ENCODE measurements at regions of chr20 and their contacts with region 1.

Region 1: GRCh38 chr20:10419550-10420133 is 14.4 kb downstream of the MKKS start:
- DNase-seq: peak; percentile 9 to 40
- H3K4me3 ChIP-seq: no peak overlapping the region
- H3K27ac ChIP-seq: peak overlapping the region; percentile 77
- H3K4me1 ChIP-seq: peaks cover 36% of the 10 kb centered on the region
- H3K27me3 ChIP-seq: no peaks in the 10 kb centered on the region
- CTCF ChIP-seq: no peak

Region 2: GRCh38 chr20:10306440-10307358 is 112.9 kb before region 1 on chr20:
- CTCF ChIA-PET with region 1: no interaction called
- POLR2A ChIA-PET with region 1: no interaction called
- intact Hi-C with region 1: loop called (anchors 5 kb)
- DNase-seq: peak in 1 of 2 experiments; percentile 78
- H3K4me3 ChIP-seq: no peak overlapping the region
- H3K27ac ChIP-seq: peak overlapping the region; percentile 43
- H3K4me1 ChIP-seq: peaks cover 59% of the 10 kb centered on the region
- H3K27me3 ChIP-seq: no peaks in the 10 kb centered on the region
- CTCF ChIP-seq: no peak

Region 3: DNA sequence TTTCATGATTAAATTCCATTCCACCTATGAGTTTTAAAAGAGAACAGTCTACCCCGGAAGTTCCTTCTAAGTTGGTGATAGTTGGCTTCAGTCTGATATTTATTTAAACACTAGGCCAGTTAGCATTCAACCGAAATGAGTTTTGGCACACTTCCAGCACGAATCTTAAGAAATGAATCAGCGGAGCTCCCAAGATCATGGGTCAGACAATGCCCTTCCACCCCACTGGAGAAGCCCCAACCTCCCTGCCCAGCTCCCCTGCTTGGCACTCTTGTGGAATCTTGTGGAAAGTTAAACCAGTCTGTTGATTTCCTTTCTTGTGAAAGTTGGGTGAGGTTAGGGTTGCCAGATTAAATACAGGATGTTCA is 49.9 kb before region 1 on chr20:
- CTCF ChIA-PET with region 1: no interaction called
- POLR2A ChIA-PET with region 1: no interaction called
- intact Hi-C with region 1: loop called (anchors 1 kb)
- DNase-seq: peak; percentile 41 to 59
- H3K4me3 ChIP-seq: no peak overlapping the region
- H3K27ac ChIP-seq: no peak overlapping the region
- H3K4me1 ChIP-seq: peaks cover 17% of the 10 kb centered on the region
- H3K27me3 ChIP-seq: no peaks in the 10 kb centered on the region
- CTCF ChIP-seq: no peak

Region 4: DNA sequence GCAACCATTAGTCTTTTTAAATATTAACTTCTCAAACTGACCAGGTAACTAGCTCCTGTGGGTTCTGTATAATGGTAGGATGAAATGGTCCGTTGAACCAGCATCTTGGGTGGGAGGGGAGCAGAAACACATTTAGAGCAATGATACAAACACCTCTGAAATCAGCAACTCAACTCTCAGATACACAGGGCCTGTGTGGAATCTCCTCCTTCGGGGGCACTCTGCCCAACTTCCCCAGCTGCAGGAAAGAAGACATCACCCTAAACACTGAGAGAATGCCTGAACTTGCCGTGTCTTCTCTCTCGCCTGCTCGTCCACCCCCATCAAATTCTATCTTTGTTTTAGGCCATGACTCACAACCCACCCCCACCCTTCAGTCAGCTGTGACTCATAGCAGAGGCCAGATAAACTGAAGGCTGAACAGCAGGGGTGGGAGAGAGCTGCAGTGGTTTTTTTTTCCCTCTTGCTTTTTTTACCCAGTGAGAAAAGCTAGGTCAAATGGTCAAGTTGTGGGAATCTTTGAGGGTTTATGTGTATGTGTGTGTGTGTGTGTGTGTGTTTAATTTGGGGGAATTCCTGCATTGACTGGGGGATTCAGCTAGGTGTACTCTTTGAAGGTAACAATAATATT is 847.6 kb after region 1 on chr20:
- CTCF ChIA-PET with region 1: no interaction called
- POLR2A ChIA-PET with region 1: interaction called, 10 read pairs
- intact Hi-C with region 1: no loop called
- DNase-seq: peak; percentile 62 to 84
- H3K4me3 ChIP-seq: peak overlapping the region; percentile 19; the same call in 1 of the 2 replicates
- H3K27ac ChIP-seq: peak overlapping the region; percentile 61
- H3K4me1 ChIP-seq: peaks cover 21% of the 10 kb centered on the region
- H3K27me3 ChIP-seq: no peaks in the 10 kb centered on the region
- CTCF ChIP-seq: no peak

Region 5: GRCh38 chr20:11454966-11455799 is 1035.5 kb after region 1 on chr20:
- CTCF ChIA-PET with region 1: no interaction called
- POLR2A ChIA-PET with region 1: no interaction called
- intact Hi-C with region 1: loop called (anchors 5 kb)
- DNase-seq: peak; percentile 49 to 90
- H3K4me3 ChIP-seq: peak overlapping the region; percentile 13; the same call in 1 of the 2 replicates
- H3K27ac ChIP-seq: peak overlapping the region; percentile 89
- H3K4me1 ChIP-seq: peaks cover 42% of the 10 kb centered on the region
- H3K27me3 ChIP-seq: no peaks in the 10 kb centered on the region
- CTCF ChIP-seq: no peak